Endothelial cell of umbilical vein (primary cell): ENCODE measurements at regions of chr2 and their contacts with region 1.

Region 1: GRCh38 chr2:69724540-69725159 is 17.3 kb upstream of the ANXA4 start:
- DNase-seq: peak; percentile 80
- H3K4me3 ChIP-seq: peak overlapping the region in 1 of 3 experiments; percentile 55
- H3K27ac ChIP-seq: no peak overlapping the region
- H3K4me1 ChIP-seq: peaks cover 2% of the 10 kb centered on the region
- H3K27me3 ChIP-seq: no peaks in the 10 kb centered on the region
- CTCF ChIP-seq: peak; percentile 87 to 88
- POLR2A ChIP-seq: no peak

Region 2: DNA sequence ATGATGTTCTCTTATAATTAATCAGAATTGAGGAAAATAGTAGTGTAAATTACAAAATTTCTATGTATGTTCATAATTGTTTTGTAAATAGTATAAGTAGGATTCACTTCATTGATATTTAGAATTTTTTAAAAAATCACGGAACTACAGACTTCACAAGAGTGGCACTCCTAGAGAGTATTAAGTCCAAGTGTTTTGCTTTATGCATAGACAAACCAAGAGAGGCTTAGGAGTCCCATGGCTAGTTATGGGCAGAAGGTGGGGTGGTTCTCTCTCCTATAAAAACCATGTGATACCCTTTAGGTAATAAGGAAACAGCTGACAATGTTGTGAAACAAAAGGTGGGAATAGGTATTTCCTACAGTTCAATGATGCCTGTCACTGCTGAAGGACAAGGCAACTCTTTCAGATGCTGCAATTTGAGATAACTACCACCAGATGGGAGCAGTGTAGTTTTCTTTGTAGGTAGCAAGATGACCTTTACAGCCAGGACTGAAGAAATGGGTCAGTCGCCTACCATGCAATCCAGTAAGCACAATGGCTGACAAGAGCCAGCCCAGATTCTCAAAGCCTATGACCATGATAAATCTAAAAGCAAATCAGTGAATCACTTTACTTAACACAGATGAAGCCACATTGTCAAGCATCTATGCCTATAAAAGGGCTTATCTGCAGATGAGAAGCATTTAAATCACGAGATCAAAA is 165.1 kb before region 1 on chr2:
- CTCF ChIA-PET with region 1: interaction called, 74 read pairs
- POLR2A ChIA-PET with region 1: no interaction called
- dilution Hi-C with region 1: no loop called
- intact Hi-C with region 1: no loop called
- DNase-seq: peak; percentile 69
- H3K4me3 ChIP-seq: no peak overlapping the region
- H3K27ac ChIP-seq: no peak overlapping the region
- H3K4me1 ChIP-seq: peaks cover 21% of the 10 kb centered on the region
- H3K27me3 ChIP-seq: no peaks in the 10 kb centered on the region
- CTCF ChIP-seq: peak; percentile 50 to 51
- POLR2A ChIP-seq: no peak

Region 3: DNA sequence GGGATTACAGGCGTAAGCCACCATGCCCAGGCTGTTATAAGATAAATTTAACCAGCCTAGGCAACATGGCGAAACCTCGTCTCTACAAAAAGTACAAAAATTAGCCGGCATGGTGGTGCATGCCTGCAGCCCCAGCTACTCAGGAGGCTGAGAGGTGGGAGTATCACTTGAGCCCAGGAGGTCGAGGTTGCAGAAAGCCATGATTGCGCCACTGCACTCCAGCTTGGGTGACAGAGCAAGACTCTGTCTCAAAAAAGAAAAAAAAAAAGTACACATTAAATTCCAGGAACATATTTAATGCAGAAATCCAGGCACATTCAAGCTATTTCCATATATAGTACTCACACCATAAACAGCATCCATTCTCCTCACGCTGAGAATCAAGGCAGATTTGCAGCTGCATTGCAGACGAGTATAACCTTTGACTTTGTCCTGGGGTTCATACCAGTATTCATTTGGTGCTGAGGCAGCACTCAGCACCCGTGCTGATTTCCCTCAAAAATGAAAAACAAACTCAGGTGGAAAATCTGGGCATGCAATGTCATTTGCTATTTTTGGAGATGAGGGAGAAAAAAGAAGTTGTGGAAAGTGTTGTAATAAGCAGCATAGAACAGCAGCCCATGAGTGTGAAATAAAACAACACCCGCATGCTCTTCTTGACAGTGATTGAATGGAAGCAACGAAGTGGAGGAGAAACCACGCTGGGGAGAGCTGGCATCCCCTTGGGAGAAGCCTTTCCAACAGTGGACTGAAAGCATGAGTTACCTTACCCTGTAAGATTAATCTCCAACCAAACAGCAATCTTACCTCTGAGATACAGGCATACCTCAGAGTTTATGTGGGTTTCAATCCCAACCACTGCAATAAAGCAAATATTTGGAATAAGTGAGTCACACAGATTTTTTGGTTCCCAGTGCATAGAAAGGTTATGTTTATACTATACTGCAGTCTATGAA is 29.5 kb before region 1 on chr2:
- CTCF ChIA-PET with region 1: interaction called, 17 read pairs
- POLR2A ChIA-PET with region 1: no interaction called
- dilution Hi-C with region 1: no loop called
- intact Hi-C with region 1: no loop called
- DNase-seq: no peak
- H3K4me3 ChIP-seq: no peak overlapping the region
- H3K27ac ChIP-seq: no peak overlapping the region
- H3K4me1 ChIP-seq: no peaks in the 10 kb centered on the region
- H3K27me3 ChIP-seq: no peaks in the 10 kb centered on the region
- CTCF ChIP-seq: no peak
- POLR2A ChIP-seq: no peak

Region 4: GRCh38 chr2:69781321-69782248 is 56.9 kb after region 1 on chr2:
- CTCF ChIA-PET with region 1: interaction called, 12 read pairs
- POLR2A ChIA-PET with region 1: no interaction called
- dilution Hi-C with region 1: no loop called
- intact Hi-C with region 1: no loop called
- DNase-seq: peak; percentile 74
- H3K4me3 ChIP-seq: no peak overlapping the region
- H3K27ac ChIP-seq: no peak overlapping the region
- H3K4me1 ChIP-seq: peaks cover 9% of the 10 kb centered on the region
- H3K27me3 ChIP-seq: no peaks in the 10 kb centered on the region
- CTCF ChIP-seq: no peak
- POLR2A ChIP-seq: peak; percentile 19

Region 5: DNA sequence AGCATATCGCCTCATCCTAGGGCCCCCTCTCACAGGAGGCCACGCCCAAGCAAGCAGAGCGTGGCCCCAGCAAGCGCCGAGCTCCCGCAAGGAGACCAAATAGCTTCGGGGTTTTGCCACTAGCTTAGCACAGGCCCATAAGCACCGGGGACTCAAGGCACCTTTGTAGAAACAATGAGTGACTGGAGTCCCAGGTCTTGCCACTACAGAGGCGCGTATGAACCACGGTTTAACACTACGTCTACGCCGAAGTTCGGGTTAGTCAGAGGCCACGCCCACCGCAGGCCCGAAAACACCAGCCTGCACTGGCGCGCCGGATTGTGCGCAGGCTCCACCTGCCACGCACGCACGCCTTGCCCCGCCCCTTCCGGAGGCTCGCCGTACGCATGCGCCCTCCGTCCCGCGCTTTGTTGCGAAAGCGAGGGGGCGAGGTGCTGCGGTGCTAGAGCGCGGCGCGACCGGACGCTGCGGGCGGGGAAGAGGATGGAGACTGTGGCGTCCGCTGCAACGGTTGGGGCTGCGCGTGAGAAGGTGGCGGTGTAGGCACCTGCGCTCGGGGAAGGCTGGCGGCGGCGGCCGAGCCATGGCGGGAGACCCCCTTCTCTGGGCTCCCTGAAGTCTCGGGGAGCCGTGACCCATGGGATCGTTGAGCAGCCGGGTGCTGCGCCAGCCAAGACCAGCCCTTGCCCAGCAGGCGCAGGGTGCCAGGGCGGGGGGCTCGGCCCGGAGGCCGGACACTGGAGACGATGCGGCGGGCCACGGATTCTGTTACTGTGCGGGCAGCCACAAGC is 104.8 kb after region 1 on chr2 and contains the start of gene GMCL1:
- CTCF ChIA-PET with region 1: interaction called, 25 read pairs
- POLR2A ChIA-PET with region 1: no interaction called
- dilution Hi-C with region 1: no loop called
- intact Hi-C with region 1: no loop called
- DNase-seq: peak; percentile 98
- H3K4me3 ChIP-seq: peak within 1 kb of the TSS; percentile 43 to 70 (median 66)
- H3K27ac ChIP-seq: peak within 1 kb of the TSS; percentile 81
- H3K4me1 ChIP-seq: peaks cover 7% of the 10 kb centered on the region
- H3K27me3 ChIP-seq: no peaks in the 10 kb centered on the region
- CTCF ChIP-seq: no peak
- POLR2A ChIP-seq: peak; percentile 90
- total RNA-seq, gene GMCL1: 13.0 and 14.6 TPM in 2 replicates

Region 6: GRCh38 chr2:69893684-69894551 is 169.3 kb after region 1 on chr2 and contains the start of gene SNRNP27:
- CTCF ChIA-PET with region 1: interaction called, 103 read pairs
- POLR2A ChIA-PET with region 1: interaction called, 3 read pairs
- dilution Hi-C with region 1: no loop called
- intact Hi-C with region 1: loop called (anchors 1 kb)
- DNase-seq: peak; percentile 70
- H3K4me3 ChIP-seq: peak within 1 kb of the TSS; percentile 76 to 97 (median 91)
- H3K27ac ChIP-seq: peak within 1 kb of the TSS; percentile 90
- H3K4me1 ChIP-seq: peaks cover 10% of the 10 kb centered on the region
- H3K27me3 ChIP-seq: no peaks in the 10 kb centered on the region
- CTCF ChIP-seq: no peak
- POLR2A ChIP-seq: peak; percentile 85
- total RNA-seq, gene SNRNP27: 43.2 and 50.6 TPM in 2 replicates

Region 7: DNA sequence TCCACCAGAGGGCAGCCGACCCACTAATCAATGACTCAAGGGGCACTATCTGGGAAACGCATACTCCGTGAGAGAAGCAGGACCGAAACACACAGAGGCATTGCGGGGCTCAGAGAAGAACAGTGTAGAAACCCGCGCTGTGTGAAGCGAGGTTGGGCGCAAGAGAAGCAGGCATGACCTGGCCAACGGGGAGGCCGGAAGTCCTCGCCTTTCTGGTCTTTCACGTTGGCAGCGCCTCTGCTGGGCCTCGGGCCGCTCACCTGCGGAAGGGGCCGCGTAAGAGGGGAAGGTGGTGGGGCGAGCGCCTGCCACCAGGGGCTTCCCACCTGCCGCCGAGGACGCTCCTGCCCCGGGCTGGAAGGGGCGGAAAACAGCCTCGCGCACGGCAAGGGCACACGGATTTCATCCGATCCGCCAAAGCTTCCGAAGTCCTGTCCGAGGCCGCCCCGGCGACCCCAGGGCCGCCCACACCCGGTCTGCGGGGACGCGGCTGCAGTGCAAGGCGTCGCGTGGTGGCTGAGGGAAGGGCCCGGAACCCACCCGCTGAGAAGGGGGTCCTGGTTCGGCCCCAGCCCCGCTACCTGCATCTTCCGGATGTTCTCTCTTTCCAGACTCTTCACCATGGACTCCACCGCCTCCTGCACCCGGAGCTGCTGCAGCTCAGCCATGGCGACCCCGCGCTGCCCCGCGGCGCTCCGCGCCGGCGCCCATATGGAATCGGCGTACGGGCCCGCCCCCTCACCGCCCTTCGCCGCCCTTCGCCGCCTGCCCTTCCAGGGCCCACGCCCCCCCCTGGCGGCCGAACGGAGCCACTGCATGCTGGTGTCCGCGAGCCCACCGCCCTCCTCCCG is 576.9 kb after region 1 on chr2 and contains the start of gene FAM136A:
- CTCF ChIA-PET with region 1: interaction called, 14 read pairs
- POLR2A ChIA-PET with region 1: no interaction called
- dilution Hi-C with region 1: no loop called
- intact Hi-C with region 1: loop called (anchors 10 kb)
- DNase-seq: peak; percentile 80
- H3K4me3 ChIP-seq: peak within 1 kb of the TSS; percentile 52 to 90 (median 62)
- H3K27ac ChIP-seq: peak within 1 kb of the TSS; percentile 6
- H3K4me1 ChIP-seq: peaks cover 5% of the 10 kb centered on the region
- H3K27me3 ChIP-seq: no peaks in the 10 kb centered on the region
- CTCF ChIP-seq: peak; percentile 70 to 97
- POLR2A ChIP-seq: peak; percentile 93
- total RNA-seq, gene FAM136A: 42.4 and 45.7 TPM in 2 replicates

Region 8: GRCh38 chr2:70431716-70432347 is 707.2 kb after region 1 on chr2:
- CTCF ChIA-PET with region 1: no interaction called
- POLR2A ChIA-PET with region 1: no interaction called
- dilution Hi-C with region 1: no loop called
- intact Hi-C with region 1: no loop called
- DNase-seq: no peak
- H3K4me3 ChIP-seq: no peak overlapping the region
- H3K27ac ChIP-seq: no peak overlapping the region
- H3K4me1 ChIP-seq: no peaks in the 10 kb centered on the region
- H3K27me3 ChIP-seq: peaks cover under 1 to 15% of the 10 kb centered on the region in 2 experiments
- CTCF ChIP-seq: no peak
- POLR2A ChIP-seq: no peak